Common myeloid progenitor, CD34-positive (primary cell): ENCODE measurements at regions of chr14 and their contacts with region 1.

Region 1: DNA sequence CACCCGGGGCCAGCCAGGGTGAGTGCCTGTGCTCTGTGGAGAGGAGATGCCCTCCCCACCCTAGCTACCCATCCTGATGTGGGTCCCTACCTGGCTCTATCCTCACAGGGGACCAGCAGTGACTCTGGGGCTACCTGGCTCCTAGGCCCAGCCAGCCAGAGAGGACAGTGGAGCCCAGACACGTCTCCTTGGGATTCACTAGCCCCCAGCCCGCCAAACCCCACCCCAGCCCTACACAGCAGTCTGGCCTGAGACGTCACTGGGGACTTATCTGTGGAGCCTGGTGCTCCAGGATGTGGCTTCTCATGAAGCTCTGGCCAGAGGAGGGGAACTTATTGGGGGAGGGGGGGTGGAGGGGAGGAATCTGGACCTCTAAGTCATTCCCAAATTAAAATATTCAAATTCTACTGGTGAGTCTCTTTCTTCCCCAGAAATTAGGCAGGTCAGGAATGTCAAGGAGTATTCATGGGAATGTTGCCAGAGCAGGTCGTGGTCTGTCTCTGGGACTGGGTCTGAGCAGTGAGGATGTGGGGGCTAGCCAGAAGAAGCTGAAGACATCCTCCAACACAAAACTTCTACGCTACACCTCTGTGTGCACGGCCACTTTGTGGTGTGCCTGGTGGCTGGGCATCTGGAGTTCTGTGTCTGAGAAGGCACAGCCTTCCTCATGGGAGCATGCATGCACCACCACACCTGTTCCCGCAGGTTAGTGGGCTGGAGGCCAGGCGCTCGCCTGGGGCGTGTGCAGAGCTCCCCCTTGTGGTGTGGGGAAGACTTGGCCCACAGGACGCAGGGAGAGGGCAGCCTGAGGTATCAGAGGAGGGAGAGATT is 2.7 kb downstream of the CMTM5 start:
- DNase-seq: peak; percentile 46 to 68 (median 66)
- H3K4me3 ChIP-seq: no peak overlapping the region
- H3K27ac ChIP-seq: no peak overlapping the region
- H3K4me1 ChIP-seq: peaks cover 0 to 24% (median 9%) of the 10 kb centered on the region in 4 experiments
- H3K27me3 ChIP-seq: peaks cover 0 to 3% (median 0%) of the 10 kb centered on the region in 5 experiments

Region 2: DNA sequence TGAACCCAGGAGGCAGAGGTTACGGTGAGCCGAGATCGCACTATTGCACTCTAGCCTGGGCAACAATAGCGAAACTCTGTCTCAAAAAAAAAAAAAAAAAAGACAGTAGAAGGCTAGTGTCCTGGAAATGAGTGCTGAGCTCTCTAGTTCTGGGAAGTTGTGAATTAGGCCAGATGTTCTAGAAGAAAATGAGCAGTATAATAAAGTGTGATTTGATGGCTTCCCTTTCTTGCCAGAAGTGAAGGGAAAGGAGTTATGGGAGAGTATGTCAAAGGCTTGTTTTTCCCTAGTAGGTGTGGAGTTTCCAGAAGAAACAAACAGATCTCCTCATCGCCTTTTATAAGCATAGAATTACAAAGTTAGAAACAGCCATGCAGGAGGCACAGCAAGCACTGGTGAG is 121.3 kb before region 1 on chr14:
- CTCF ChIA-PET with region 1: interaction called, 40 read pairs
- POLR2A ChIA-PET with region 1: no interaction called
- DNase-seq: no peak
- H3K4me3 ChIP-seq: no peak overlapping the region
- H3K27ac ChIP-seq: no peak overlapping the region
- H3K4me1 ChIP-seq: no peaks in the 10 kb centered on the region
- H3K27me3 ChIP-seq: no peaks in the 10 kb centered on the region

Region 3: DNA sequence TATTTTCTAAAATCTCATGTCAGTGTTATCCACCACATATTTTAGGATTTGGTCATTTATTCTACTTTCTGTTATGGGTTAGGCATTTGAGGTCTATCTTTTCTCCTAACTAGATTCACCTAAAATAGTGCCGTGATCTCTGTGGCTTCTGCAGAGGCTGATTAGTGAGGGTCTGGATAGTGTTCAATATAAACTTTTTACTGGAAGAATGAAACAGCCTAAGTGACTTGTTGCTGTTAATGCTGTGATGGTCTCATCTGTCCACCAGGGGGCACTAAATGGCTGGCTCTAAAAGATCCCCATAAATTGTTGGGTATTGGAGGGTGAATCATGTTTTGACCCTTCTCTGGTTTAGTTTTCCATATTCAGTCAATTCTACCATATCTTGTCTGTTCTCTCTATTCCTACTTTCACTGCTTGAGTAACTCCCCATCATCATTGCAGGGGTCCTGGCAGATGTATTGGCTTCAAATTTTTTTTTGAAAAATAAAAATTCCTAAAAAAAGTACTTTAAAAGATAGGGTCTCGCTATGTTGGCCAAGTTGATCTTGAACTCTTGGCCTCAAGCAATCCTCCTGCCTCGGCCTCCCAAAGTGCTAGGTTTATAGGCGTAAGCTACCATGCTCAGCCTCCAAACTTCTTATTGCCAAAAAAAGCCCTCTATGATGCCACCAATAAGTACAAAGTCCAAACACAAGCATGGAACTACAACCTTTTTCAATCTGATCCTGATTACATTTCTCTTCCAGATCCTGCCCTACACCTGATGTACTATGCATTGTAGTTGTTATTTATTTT is 51.4 kb before region 1 on chr14:
- CTCF ChIA-PET with region 1: interaction called, 108 read pairs
- POLR2A ChIA-PET with region 1: no interaction called
- DNase-seq: peak; percentile 79 to 87 (median 79)
- H3K4me3 ChIP-seq: no peak overlapping the region
- H3K27ac ChIP-seq: no peak overlapping the region
- H3K4me1 ChIP-seq: peaks cover 0 to 6% (median 1%) of the 10 kb centered on the region in 4 experiments
- H3K27me3 ChIP-seq: no peaks in the 10 kb centered on the region

Region 4: DNA sequence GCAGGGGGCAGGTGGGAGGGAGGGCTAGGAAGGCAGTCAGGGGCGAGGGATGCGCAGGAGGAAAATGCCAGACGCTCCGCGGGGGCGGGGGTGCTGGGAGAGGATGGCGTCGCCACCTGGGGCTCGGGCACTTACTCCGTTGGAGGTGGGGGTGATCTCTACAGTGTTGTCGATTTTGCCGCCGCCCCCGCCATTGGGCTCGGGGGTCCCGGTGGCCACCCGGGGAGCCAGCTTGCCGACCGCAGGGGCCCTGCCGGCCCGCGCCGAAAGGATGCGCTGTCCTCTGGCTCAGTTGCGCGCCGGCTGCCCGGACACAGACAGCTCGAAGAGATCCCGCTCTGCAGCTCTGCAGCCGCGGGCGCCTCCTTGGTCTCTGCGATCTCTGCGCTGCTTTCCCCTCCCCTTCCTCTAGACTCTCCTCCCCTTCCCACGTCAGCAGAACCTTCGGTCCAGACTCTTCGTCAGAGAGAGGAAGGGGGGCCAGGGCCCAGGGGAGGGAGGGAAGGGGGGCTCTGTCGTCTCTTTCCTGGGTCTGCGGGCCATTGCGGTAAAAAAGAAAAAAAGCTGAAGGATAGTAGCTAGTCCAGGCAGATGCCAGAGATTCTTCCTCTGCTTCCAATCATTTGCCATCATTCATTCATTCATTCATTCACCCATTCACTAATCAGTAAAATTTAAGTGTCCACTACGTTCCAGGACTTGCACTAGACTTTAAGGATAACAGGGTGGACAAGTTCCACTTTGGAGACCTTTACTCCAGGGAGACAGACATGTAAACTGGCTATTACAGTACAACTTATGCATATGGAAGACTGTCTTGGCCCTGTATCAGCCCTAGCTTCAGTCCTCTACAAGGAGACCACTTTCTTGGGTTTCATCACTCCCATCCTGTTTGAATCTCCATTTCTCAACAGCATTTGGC is 26.8 kb before region 1 on chr14 and contains the start of gene SLC22A17:
- CTCF ChIA-PET with region 1: interaction called, 27 read pairs
- POLR2A ChIA-PET with region 1: interaction called, 3 read pairs
- DNase-seq: peak; percentile 79 to 86 (median 83)
- H3K4me3 ChIP-seq: peak within 1 kb of the TSS; percentile 45 to 85 (median 60)
- H3K27ac ChIP-seq: no peak within 1 kb of the TSS
- H3K4me1 ChIP-seq: peaks cover 0 to 16% (median 11%) of the 10 kb centered on the region in 4 experiments
- H3K27me3 ChIP-seq: peaks cover 0 to 47% (median 14%) of the 10 kb centered on the region in 5 experiments

Region 5: GRCh38 chr14:23392613-23393012 is 13.0 kb after region 1 on chr14:
- CTCF ChIA-PET with region 1: interaction called, 24 read pairs
- POLR2A ChIA-PET with region 1: no interaction called
- DNase-seq: no peak
- H3K4me3 ChIP-seq: no peak overlapping the region
- H3K27ac ChIP-seq: no peak overlapping the region
- H3K4me1 ChIP-seq: peaks cover 0 to 2% (median 0%) of the 10 kb centered on the region in 4 experiments
- H3K27me3 ChIP-seq: peaks cover 0 to 10% (median 0%) of the 10 kb centered on the region in 5 experiments

Region 6: DNA sequence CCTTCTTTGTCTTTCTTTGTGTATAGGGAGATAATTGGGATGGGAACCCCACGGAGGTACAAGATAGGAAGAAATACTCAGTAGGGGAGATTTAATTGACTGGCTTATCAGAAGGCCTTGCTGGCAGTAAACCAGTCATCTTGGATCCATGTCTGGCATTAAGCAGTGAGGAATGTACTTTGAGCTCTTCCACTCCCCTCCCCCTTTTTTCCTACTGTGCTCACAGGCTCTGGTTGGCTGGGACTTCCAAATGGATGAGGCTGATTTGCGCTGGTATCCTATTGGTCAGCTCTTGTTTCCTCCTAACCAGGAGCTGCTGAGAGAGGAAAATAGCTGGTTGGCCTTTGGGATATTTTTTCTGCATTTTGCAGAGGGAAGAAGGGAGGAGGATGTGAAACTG is 114.6 kb after region 1 on chr14:
- CTCF ChIA-PET with region 1: no interaction called
- POLR2A ChIA-PET with region 1: no interaction called
- DNase-seq: no peak
- H3K4me3 ChIP-seq: no peak overlapping the region
- H3K27ac ChIP-seq: no peak overlapping the region
- H3K4me1 ChIP-seq: no peaks in the 10 kb centered on the region
- H3K27me3 ChIP-seq: no peaks in the 10 kb centered on the region

Region 7: DNA sequence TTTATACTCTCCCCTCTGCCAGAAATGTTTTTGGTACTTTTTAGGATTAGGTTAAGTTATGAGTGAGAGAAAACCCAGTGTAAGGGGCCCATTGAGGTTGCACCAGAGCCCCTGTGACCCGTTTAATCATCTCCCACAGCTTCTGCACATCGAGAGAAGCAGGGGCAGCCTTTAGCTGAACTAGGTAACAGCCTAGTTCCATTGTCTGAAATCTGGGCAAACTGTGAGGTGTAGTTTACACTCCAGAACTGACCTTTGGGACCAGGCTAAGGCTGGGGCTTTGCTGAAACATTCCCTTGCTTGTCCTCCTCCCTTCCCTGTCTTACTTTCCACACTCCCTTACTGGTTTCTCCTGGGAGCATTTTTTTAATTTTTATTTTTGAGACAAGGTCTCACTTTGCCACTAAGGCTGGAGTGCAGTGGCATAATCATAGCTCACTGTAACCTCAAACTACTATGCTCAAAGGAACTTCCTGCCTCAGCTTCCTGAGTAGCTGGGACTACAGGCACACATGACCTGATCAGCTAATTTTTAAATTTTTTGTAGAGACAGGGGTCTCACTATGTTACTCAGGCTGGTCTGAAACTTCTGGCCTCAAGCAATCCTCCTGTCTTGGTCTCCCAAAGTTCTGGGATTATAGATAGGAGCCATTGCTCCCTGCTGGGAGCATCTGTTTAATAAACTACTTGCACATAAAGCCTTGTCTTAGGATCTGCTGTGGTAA is 230.7 kb after region 1 on chr14:
- CTCF ChIA-PET with region 1: no interaction called
- POLR2A ChIA-PET with region 1: no interaction called
- DNase-seq: peak in 2 of 3 donors; percentile 48 to 70
- H3K4me3 ChIP-seq: peak overlapping the region in 2 of 7 experiments; percentile 20 to 32
- H3K27ac ChIP-seq: peak overlapping the region in 1 of 2 experiments; percentile 3
- H3K4me1 ChIP-seq: peaks cover 4 to 24% (median 18%) of the 10 kb centered on the region in 4 experiments
- H3K27me3 ChIP-seq: no peaks in the 10 kb centered on the region